Activated T-helper 2 cell treated with anti-CD3 and anti-CD28 coated beads, Interferon-gamma antibody, Interleukin-2, Interleukin-4, amounts not matched to agents 10 μg/mL and 5 μg/mL and 100 μg/mL, durations not matched to agents 14 hours and 24 hours and 36 hours (primary cell): ENCODE measurements at regions of chr16 and their contacts with region 1.

Region 1: DNA sequence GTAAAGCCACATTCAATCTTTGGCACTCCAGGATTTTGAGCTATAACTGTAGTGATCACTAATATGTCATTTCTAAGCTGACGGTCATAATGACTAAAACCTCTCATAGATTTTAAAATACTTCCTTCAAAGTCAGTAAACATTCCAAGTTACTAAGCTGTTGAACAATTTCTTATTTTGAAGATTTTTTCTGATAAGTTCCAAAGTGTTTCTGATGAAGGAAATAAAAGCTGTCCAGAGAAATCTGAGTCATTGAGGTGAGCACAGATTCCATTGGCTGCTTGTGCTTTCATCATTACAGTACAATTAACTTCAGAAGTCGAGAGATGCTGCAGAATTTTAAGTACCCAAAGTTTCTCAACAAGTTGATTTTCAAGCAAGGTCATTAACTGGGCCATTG is 23.9 kb downstream of the NLRC5 start:
- DNase-seq: no peak
- H3K4me3 Mint-ChIP-seq: peak overlapping the region; percentile 14
- H3K27ac Mint-ChIP-seq: peak overlapping the region; percentile 97
- H3K4me1 Mint-ChIP-seq: peaks cover 74% of the 10 kb centered on the region
- H3K27me3 Mint-ChIP-seq: no peaks in the 10 kb centered on the region

Region 2: GRCh38 chr16:56938422-56939156 is 74.6 kb before region 1 on chr16:
- intact Hi-C with region 1: loop called (anchors 2 kb)
- DNase-seq: peak; percentile 47
- H3K4me3 Mint-ChIP-seq: peak overlapping the region; percentile 80
- H3K27ac Mint-ChIP-seq: peak overlapping the region; percentile 92
- H3K4me1 Mint-ChIP-seq: peaks cover 74% of the 10 kb centered on the region
- H3K27me3 Mint-ChIP-seq: no peaks in the 10 kb centered on the region

Region 3: GRCh38 chr16:56950881-56951771 is 62.1 kb before region 1 on chr16:
- intact Hi-C with region 1: no loop called
- DNase-seq: peak; percentile 37
- H3K4me3 Mint-ChIP-seq: no peak overlapping the region
- H3K27ac Mint-ChIP-seq: peak overlapping the region; percentile 4
- H3K4me1 Mint-ChIP-seq: peaks cover 15% of the 10 kb centered on the region
- H3K27me3 Mint-ChIP-seq: no peaks in the 10 kb centered on the region

Region 4: GRCh38 chr16:57000271-57001025 is 12.8 kb before region 1 on chr16:
- intact Hi-C with region 1: loop called (anchors 1 kb)
- DNase-seq: no peak
- H3K4me3 Mint-ChIP-seq: peak overlapping the region; percentile 52
- H3K27ac Mint-ChIP-seq: peak overlapping the region; percentile 98
- H3K4me1 Mint-ChIP-seq: peaks cover 75% of the 10 kb centered on the region
- H3K27me3 Mint-ChIP-seq: no peaks in the 10 kb centered on the region

Region 5: DNA sequence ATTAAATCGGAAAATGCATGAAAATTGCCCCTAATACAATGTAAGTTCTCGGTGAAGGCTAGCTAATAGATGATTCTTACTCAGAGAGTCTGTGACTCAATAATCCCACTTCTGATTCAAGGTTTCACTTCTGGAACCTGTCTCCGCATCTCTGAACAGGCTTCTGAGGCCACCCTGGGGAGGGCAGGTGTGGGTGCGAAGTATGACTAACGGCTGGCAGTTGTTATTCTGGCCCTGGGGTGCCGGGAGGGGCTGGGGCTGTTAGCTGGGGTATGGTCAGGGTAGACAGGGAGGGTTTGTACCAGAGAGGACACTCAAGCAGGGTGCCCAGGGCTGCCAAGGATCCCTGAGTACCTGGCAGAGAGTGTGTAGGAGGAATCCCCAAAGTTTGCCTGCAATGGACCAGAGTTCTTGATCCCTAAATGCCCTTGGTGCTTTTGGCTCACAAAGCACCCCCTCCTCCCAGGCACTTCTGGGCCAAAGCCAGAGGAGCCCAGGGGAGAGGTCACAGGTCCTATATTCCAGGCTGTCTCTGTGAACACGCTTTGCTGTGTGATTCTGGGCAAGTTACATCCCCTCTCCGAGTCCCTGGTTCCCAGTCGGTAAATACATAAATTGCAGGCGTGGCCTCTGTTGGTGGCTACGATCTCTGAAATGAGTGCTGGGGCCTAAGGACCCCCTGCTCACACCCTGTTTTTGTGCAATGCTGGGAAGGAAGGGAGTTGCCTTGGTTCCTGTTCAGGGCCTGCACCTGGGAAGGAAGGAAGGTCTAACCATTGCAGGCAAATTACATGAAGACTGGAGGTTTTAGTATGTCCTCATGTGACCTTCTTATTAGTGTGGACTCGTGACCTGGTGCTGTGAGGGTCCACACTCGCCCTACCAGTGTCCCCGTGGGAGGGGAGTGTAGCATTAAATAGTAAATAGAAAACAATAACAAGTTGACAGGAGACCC is 29.2 kb after region 1 on chr16:
- intact Hi-C with region 1: loop called (anchors 1 kb)
- DNase-seq: peak; percentile 67
- H3K4me3 Mint-ChIP-seq: peak overlapping the region; percentile 62
- H3K27ac Mint-ChIP-seq: peak overlapping the region; percentile 94
- H3K4me1 Mint-ChIP-seq: peaks cover 60% of the 10 kb centered on the region
- H3K27me3 Mint-ChIP-seq: no peaks in the 10 kb centered on the region

Region 6: GRCh38 chr16:57185944-57186871 is 173.0 kb after region 1 on chr16 and contains the starts of genes PSME3IP1 and RSPRY1:
- intact Hi-C with region 1: no loop called
- DNase-seq: peak; percentile 99
- H3K4me3 Mint-ChIP-seq: peak within 1 kb of the TSS; percentile 98
- H3K27ac Mint-ChIP-seq: peak within 1 kb of the TSS; percentile 96
- H3K4me1 Mint-ChIP-seq: peaks cover 36% of the 10 kb centered on the region
- H3K27me3 Mint-ChIP-seq: no peaks in the 10 kb centered on the region
- total RNA-seq, gene PSME3IP1: 109 and 125 TPM in 2 replicates
- total RNA-seq, gene RSPRY1: 33.3 and 43.0 TPM in 2 replicates

Region 7: DNA sequence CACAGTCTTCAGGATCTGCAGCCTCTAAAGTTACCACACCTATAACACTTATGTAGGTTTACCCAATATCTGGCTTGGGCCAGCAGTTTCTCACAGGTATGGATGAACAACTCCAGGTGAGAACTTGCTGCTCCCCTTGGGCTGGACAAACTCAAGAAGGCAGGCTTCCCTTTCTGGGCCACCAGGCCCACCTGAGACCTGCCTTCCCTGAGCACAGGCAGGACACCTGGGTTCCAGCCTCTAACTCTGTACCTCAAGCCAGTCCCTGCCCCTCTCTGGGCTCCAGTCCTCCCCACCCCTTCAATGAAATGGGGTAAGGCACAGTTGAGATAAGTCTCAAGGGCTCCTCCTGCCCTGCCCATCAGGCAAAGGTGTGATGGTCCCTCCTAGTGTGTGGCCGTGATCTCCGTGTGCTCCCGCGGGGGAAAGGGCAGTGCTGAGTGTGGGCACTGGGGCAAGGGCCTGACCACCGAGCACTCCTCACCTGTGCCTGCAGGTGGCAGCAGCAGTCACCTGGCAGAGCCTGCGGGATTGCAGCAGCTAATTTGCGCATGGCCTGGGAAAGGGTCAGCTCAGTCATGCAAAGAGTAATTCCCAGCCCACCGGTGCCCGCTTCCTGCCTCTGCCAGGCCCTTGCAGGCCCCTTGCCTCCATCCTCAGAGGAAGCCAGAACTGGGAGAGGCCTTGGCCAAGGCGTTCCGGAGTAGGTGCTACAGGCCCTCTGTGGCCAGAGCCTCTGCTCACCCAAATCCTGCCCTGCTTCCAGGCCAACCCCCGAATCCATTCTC is 587.0 kb after region 1 on chr16:
- intact Hi-C with region 1: loop called (anchors 10 kb)
- DNase-seq: no peak
- H3K4me3 Mint-ChIP-seq: no peak overlapping the region
- H3K27ac Mint-ChIP-seq: no peak overlapping the region
- H3K4me1 Mint-ChIP-seq: peaks cover 49% of the 10 kb centered on the region
- H3K27me3 Mint-ChIP-seq: peaks cover 7% of the 10 kb centered on the region